ENCODE measurements at regions of chr2 and their contacts with region 1.

Region 1: DNA sequence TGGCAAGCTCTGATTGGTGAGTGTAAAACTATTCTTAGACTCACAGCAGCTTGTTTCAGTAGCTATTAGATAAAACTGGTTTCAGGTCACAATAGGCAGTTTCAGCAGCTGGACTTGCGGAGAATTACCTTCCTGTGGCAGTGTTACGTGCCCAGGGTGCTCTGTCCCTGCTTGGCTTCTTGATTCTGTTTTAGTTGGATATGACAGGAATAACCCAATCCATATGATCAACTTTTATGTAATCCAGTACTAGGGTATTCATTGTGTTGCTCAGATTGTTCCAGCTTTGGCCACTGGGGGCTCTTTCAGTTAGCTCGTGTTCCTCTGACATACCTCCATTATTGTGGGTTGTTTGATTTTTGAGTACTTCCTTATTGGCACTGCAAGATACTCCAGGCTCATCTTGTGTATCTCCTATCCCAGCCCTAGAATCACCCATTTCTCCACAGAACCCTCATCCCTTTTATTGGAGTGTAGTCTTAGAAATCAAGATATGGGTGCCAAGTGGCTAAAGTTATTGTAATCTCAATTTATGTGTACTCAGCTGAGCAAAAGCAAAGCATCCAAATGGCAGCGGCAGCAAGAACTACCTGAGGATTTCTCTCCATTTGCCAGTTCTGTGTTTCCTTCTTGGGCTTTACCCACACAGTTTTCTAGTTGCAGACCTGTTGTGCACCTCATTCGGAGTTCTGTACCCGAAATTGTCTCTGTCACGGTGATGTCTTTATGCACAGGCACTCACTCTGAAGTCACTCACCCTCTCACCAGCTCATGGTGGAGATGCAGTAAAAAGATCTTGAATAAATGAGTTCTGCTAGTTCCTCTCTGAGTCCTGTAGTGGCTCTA is 43.4 kb downstream of the INPP4A start:
- DNase-seq: peak in 4 of 5 donors; percentile 52 to 58 (median 56)
- H3K4me3 ChIP-seq: no peak overlapping the region
- H3K4me3 Mint-ChIP-seq: peak overlapping the region in 6 of 8 donors; percentile 3 to 61 (median 46)
- H3K27ac ChIP-seq: no peak overlapping the region
- H3K27ac Mint-ChIP-seq: peak overlapping the region; percentile 32 to 81 (median 70)
- H3K4me1 ChIP-seq: peaks cover 84% of the 10 kb centered on the region
- H3K4me1 Mint-ChIP-seq: peaks cover 74 to 100% (median 85%) of the 10 kb centered on the region in 4 donors
- H3K27me3 ChIP-seq: no peaks in the 10 kb centered on the region
- H3K27me3 Mint-ChIP-seq: no peaks in the 10 kb centered on the region

Region 2: GRCh38 chr2:98455494-98455976 is 32.5 kb before region 1 on chr2:
- CTCF ChIA-PET with region 1: interaction called, 81 read pairs
- POLR2A ChIA-PET with region 1: interaction called, 327 read pairs
- intact Hi-C with region 1: no loop called
- DNase-seq: peak; percentile 48 to 86 (median 64)
- H3K4me3 ChIP-seq: peak overlapping the region in 1 of 2 donors; percentile 18
- H3K4me3 Mint-ChIP-seq: peak overlapping the region; percentile 11 to 84 (median 69)
- H3K27ac ChIP-seq: peak overlapping the region; percentile 69
- H3K27ac Mint-ChIP-seq: peak overlapping the region; percentile 85 to 97 (median 94)
- H3K4me1 ChIP-seq: peaks cover 99% of the 10 kb centered on the region
- H3K4me1 Mint-ChIP-seq: peaks cover 80 to 100% (median 92%) of the 10 kb centered on the region in 4 donors
- H3K27me3 ChIP-seq: no peaks in the 10 kb centered on the region
- H3K27me3 Mint-ChIP-seq: no peaks in the 10 kb centered on the region

Region 3: DNA sequence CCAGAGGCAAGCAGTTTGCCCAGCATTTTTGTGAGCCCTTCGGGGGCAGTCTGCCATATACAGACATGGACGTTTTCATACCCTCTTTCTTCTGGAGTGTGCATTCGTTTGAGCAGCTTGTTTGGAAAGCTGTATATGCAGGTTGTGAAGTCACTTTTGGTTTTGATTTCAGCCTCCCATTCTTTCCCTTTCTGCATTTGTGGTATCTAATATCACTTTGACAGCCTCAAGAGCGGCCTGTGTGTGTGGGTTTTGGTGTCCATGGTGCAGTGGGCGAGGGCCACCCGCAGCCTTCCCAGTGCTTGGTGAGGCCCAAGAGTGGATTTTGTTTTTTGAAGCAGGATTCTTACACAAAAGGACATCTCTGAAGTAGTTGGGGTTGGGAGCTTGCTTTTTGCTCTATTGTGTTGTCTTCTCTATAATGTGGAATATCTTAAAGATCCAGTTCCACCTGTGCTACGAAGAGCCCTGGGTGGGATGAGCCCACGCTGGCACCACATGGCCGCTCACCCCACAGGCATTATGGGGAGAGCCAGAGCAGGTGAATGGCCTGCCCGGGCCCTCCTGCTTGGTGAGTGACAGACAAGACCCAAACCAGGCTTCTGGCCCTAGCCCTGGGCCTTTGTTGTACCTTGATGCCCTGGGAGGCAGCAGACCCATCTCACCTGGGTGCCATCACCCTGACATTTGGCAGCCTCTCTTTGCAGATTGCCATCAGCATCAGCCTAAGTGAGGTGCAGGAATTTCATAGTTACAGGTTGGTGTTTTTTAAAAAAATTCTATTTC is 13.8 kb before region 1 on chr2:
- CTCF ChIA-PET with region 1: interaction called, 46 read pairs
- POLR2A ChIA-PET with region 1: interaction called, 327 read pairs
- intact Hi-C with region 1: no loop called
- DNase-seq: peak in 2 of 5 donors; percentile 33 to 45
- H3K4me3 ChIP-seq: peak overlapping the region in 1 of 2 donors; percentile 19
- H3K4me3 Mint-ChIP-seq: peak overlapping the region; percentile 76 to 92 (median 84)
- H3K27ac ChIP-seq: peak overlapping the region; percentile 35
- H3K27ac Mint-ChIP-seq: peak overlapping the region; percentile 85 to 98 (median 94)
- H3K4me1 ChIP-seq: peaks cover 98% of the 10 kb centered on the region
- H3K4me1 Mint-ChIP-seq: peaks cover 78 to 100% (median 89%) of the 10 kb centered on the region in 4 donors
- H3K27me3 ChIP-seq: no peaks in the 10 kb centered on the region
- H3K27me3 Mint-ChIP-seq: no peaks in the 10 kb centered on the region

Region 4: GRCh38 chr2:98505311-98505808 is 17.3 kb after region 1 on chr2:
- CTCF ChIA-PET with region 1: interaction called, 17 read pairs
- POLR2A ChIA-PET with region 1: no interaction called
- intact Hi-C with region 1: no loop called
- DNase-seq: peak in 2 of 5 donors; percentile 24 to 31
- H3K4me3 ChIP-seq: no peak overlapping the region
- H3K4me3 Mint-ChIP-seq: peak overlapping the region in 7 of 8 donors; percentile 8 to 73 (median 42)
- H3K27ac ChIP-seq: peak overlapping the region; percentile 24
- H3K27ac Mint-ChIP-seq: peak overlapping the region; percentile 65 to 85 (median 79)
- H3K4me1 ChIP-seq: peaks cover 93% of the 10 kb centered on the region
- H3K4me1 Mint-ChIP-seq: peaks cover 73 to 95% (median 85%) of the 10 kb centered on the region in 4 donors
- H3K27me3 ChIP-seq: no peaks in the 10 kb centered on the region
- H3K27me3 Mint-ChIP-seq: no peaks in the 10 kb centered on the region

Measured in CD4-positive, alpha-beta memory T cell (primary cell).